IMR-90 (cell line): ENCODE measurements at regions of chr5 and their contacts with region 1.

Region 1: DNA sequence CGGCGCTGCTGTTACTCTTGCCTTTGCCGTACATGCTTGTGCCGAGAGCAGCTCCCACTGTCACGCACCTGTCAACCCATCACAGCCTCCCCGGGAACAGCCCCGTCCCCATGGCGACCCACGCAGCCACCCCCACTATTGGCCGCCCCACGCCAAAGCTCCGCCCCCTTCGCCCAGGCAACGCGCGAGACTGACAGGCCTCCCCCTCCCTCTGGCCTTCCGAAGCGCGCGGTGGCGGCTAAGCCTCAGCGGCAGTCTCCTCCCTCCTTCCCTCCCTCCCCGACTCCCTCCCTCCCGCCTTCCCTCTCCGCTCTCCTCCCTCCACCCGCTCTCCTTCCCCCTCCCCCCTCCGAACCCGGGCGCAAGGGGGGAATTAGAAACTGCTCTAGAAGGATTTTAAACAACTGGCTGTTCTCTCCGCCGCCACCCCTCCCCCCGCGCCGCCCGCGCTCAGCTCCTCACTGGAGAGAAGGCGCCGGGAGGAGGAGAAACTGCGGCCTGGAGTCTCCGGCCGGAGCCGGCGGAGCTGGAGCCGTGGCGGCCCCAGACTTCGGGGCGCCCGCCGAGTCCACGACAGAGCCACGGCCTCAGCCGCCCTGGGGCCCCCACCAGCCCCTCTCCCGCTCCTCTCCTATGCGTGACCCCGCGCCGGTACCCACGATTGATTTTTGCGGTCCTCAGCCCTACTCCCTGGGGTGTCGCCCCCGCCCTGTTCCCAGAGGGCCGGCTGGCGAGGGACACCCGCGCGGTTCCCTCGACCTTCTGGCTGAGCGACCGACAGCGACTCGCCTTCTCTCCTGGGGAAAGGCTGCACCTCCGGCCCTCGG is at the start of gene SSBP2:
- DNase-seq: peak; percentile 98
- ATAC-seq: peak; percentile 93
- H3K4me3 ChIP-seq: peak within 1 kb of the TSS; percentile 58
- H3K27ac ChIP-seq: peak within 1 kb of the TSS; percentile 93
- H3K4me1 ChIP-seq: peaks cover 4% of the 10 kb centered on the region
- H3K27me3 ChIP-seq: no peaks in the 10 kb centered on the region
- CTCF ChIP-seq: no peak
- POLR2A ChIP-seq: peak; percentile 60
- RAD21 ChIP-seq: peak; percentile 70
- total RNA-seq, gene SSBP2: 33.6 and 42.7 TPM in 2 replicates

Region 2: DNA sequence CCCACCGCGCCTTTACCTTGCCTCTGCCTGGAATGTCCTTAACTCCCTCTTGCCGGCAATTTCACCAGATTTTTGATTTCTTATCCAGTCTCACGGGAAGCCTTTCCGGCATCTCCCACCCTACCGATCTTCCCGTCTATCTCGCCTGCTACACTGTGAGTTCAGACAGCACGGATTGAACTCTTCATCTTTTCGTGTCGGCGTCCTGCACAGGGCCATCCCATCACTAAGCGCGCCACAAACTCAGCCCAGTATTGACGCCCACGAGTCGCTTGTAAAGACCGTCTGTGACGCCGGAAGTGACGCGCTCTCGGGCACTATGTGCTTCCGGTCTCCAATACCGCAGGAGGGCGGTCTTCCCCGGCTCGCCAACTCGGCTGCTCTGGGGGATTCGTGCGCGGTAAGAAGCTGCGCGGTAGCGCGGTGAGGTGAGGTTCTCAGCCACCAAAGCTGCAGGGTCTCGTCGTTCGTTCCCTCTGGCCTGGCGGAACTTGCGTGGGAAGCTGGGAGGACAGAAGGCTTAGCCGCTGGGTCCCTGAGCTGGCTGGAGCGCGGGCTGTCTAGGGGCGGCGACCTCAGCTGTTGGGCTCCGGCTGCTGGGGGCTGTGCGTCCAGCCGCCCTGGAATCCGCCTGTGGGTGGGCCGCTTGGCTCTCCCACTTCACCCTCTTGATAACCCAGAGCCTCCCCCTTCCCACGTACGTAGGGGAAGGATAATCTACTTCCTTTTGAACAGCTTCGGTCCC is 449.8 kb before region 1 on chr5 and contains the start of gene ZCCHC9:
- CTCF ChIA-PET with region 1: no interaction called
- POLR2A ChIA-PET with region 1: no interaction called
- dilution Hi-C with region 1: no loop called
- in situ Hi-C with region 1: no loop called
- intact Hi-C with region 1: loop called (anchors 10 kb)
- DNase-seq: peak; percentile 96
- ATAC-seq: peak; percentile 87
- H3K4me3 ChIP-seq: peak within 1 kb of the TSS; percentile 61
- H3K27ac ChIP-seq: peak within 1 kb of the TSS; percentile 91
- H3K4me1 ChIP-seq: peaks cover 4% of the 10 kb centered on the region
- H3K27me3 ChIP-seq: no peaks in the 10 kb centered on the region
- CTCF ChIP-seq: peak; percentile 35
- POLR2A ChIP-seq: peak; percentile 94
- RAD21 ChIP-seq: no peak
- total RNA-seq, gene ZCCHC9: 24.6 and 41.1 TPM in 2 replicates

Region 3: GRCh38 chr5:81506900-81507588 is 244.2 kb before region 1 on chr5:
- CTCF ChIA-PET with region 1: interaction called, 5 read pairs
- POLR2A ChIA-PET with region 1: no interaction called
- dilution Hi-C with region 1: no loop called
- in situ Hi-C with region 1: loop called (anchors 5 kb)
- intact Hi-C with region 1: loop called (anchors 1 kb)
- DNase-seq: peak; percentile 93
- ATAC-seq: peak; percentile 95
- H3K4me3 ChIP-seq: no peak overlapping the region
- H3K27ac ChIP-seq: no peak overlapping the region
- H3K4me1 ChIP-seq: no peaks in the 10 kb centered on the region
- H3K27me3 ChIP-seq: no peaks in the 10 kb centered on the region
- CTCF ChIP-seq: peak; percentile 96
- POLR2A ChIP-seq: no peak
- RAD21 ChIP-seq: peak; percentile 98

Region 4: GRCh38 chr5:81787474-81788242 is 36.4 kb after region 1 on chr5:
- CTCF ChIA-PET with region 1: interaction called, 3 read pairs
- POLR2A ChIA-PET with region 1: no interaction called
- dilution Hi-C with region 1: no loop called
- in situ Hi-C with region 1: no loop called
- intact Hi-C with region 1: loop called (anchors 1 kb)
- DNase-seq: peak; percentile 80
- ATAC-seq: peak; percentile 71
- H3K4me3 ChIP-seq: no peak overlapping the region
- H3K27ac ChIP-seq: peak overlapping the region; percentile 55; the same call in 1 of the 2 replicates
- H3K4me1 ChIP-seq: peaks cover 12% of the 10 kb centered on the region
- H3K27me3 ChIP-seq: no peaks in the 10 kb centered on the region
- CTCF ChIP-seq: no peak
- POLR2A ChIP-seq: no peak
- RAD21 ChIP-seq: no peak

Region 5: DNA sequence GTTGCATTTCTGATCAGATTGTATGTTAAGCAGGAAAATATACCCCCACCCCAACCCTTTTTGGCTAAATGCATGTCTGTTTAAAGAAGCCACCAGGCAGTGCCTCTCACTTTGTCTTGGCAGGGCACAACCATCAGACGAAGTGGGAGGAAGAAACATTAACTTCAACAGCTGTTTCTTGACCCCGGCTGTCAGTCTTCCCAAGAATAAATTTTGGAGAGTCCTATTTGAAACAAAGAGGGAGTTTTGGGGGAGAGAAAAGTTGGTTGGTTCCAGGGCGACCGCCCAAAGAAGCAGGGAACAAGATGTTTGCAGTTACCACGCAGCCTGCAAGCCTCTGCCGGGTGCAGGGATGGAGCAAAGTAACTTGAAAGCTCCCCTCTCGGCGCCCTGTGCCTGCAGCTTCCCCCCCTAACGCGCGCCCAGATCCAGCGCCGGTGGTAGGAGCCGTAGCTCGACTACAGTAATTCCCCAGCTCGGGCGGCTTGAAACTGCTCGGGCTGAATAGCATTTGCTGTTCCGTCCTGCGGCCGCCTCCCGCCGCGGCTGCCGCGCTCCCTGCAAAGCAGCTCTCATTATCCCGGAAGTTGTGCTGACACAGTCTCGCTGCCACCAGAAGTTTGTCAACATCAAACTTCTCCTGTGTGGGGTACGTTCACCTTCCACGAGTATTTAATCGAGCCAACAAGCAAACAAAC is 100.4 kb after region 1 on chr5:
- CTCF ChIA-PET with region 1: interaction called, 9 read pairs
- POLR2A ChIA-PET with region 1: interaction called, 29 read pairs
- dilution Hi-C with region 1: no loop called
- in situ Hi-C with region 1: loop called (anchors 5 kb)
- intact Hi-C with region 1: loop called (anchors 1 kb)
- DNase-seq: peak; percentile 94
- ATAC-seq: peak; percentile 93
- H3K4me3 ChIP-seq: peak overlapping the region; percentile 31
- H3K27ac ChIP-seq: peak overlapping the region; percentile 94
- H3K4me1 ChIP-seq: peaks cover 19% of the 10 kb centered on the region
- H3K27me3 ChIP-seq: no peaks in the 10 kb centered on the region
- CTCF ChIP-seq: 0 out of 2 replicates have a peak, but pooled peaks have one; percentile 1
- POLR2A ChIP-seq: no peak
- RAD21 ChIP-seq: peak; percentile 60

Region 6: GRCh38 chr5:82165740-82166530 is 414.7 kb after region 1 on chr5:
- CTCF ChIA-PET with region 1: interaction called, 4 read pairs
- POLR2A ChIA-PET with region 1: interaction called, 4 read pairs
- dilution Hi-C with region 1: no loop called
- in situ Hi-C with region 1: loop called (anchors 25 kb)
- intact Hi-C with region 1: loop called (anchors 1 kb)
- DNase-seq: peak; percentile 95
- ATAC-seq: peak; percentile 79
- H3K4me3 ChIP-seq: no peak overlapping the region
- H3K27ac ChIP-seq: no peak overlapping the region
- H3K4me1 ChIP-seq: peaks cover 5% of the 10 kb centered on the region
- H3K27me3 ChIP-seq: no peaks in the 10 kb centered on the region
- CTCF ChIP-seq: peak; percentile 94
- POLR2A ChIP-seq: peak; percentile 36; the same call in 1 of the 2 replicates
- RAD21 ChIP-seq: peak; percentile 94